ENCODE measurements at regions of chr2 and their contacts with region 1.

Region 1: GRCh38 chr2:149213764-149214493 is 116.5 kb upstream of the LYPD6 start:
- DNase-seq: no peak
- H3K4me3 ChIP-seq: no peak overlapping the region
- H3K27ac ChIP-seq: no peak overlapping the region
- H3K4me1 ChIP-seq: no peaks in the 10 kb centered on the region
- H3K27me3 ChIP-seq: no peaks in the 10 kb centered on the region
- CTCF ChIP-seq: no peak
- POLR2A ChIP-seq: no peak

Region 2: GRCh38 chr2:149579972-149580882 is 366.3 kb after region 1 on chr2:
- intact Hi-C with region 1: loop called (anchors 5 kb)
- DNase-seq: no peak
- H3K4me3 ChIP-seq: no peak overlapping the region
- H3K27ac ChIP-seq: no peak overlapping the region
- H3K4me1 ChIP-seq: no peaks in the 10 kb centered on the region
- H3K27me3 ChIP-seq: no peaks in the 10 kb centered on the region
- CTCF ChIP-seq: no peak
- POLR2A ChIP-seq: no peak

Region 3: GRCh38 chr2:150459281-150459680 is 1245.4 kb after region 1 on chr2:
- intact Hi-C with region 1: no loop called
- DNase-seq: no peak
- H3K4me3 ChIP-seq: no peak overlapping the region
- H3K27ac ChIP-seq: no peak overlapping the region
- H3K4me1 ChIP-seq: no peaks in the 10 kb centered on the region
- H3K27me3 ChIP-seq: no peaks in the 10 kb centered on the region
- CTCF ChIP-seq: no peak
- POLR2A ChIP-seq: no peak